MCF 10A (cell line): ENCODE measurements at regions of chr1 and their contacts with region 1.

Region 1: GRCh38 chr1:168145184-168146159 is 8.7 kb upstream of the GPR161 start:
- DNase-seq: peak; percentile 90
- H3K4me3 Mint-ChIP-seq: no peak overlapping the region
- H3K27ac Mint-ChIP-seq: no peak overlapping the region
- H3K4me1 Mint-ChIP-seq: peaks cover 5% of the 10 kb centered on the region
- H3K27me3 Mint-ChIP-seq: no peaks in the 10 kb centered on the region
- CTCF ChIP-seq: peak; percentile 96

Region 2: DNA sequence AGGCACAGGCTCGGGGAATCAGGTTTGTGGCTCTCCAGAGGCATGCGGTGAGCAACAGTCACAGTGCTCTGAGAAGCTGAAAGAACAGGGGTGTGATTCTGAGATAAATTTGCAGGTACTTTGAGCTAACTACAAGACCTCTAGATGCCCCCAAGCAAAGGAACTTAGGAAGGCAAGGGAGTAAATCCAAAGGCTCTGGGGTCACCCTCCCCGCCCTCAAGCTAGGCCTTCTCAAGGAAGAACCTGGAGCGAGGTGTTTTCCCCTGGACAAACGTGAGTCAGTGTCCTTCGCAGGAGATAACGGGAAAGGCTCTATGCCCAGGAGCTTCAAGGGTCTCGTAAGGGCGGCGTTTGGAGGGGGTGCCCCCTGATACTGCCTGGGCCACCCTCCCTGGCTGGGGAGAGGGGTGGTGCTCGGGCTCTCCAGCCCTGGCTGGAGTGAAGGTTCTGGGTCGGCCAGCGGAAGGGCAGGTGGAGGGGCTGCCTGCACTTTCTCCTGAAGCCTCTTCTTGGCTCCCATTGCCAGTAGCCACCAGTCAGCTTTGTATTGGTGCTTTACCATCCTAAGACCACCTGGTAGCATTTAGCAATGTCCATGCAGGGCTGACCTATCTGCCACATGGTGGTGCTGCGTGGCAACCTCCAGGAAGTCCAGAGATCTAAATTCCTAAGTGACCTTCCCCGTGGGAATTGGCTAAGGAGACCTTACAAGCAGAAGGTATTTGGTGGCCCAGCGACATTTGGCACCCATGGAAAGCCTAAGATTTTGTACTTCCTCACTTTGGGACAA is 52.7 kb before region 1 on chr1:
- CTCF ChIA-PET with region 1: interaction called, 64 read pairs
- POLR2A ChIA-PET with region 1: no interaction called
- intact Hi-C with region 1: loop called (anchors 1 kb)
- DNase-seq: peak; percentile 57
- H3K4me3 Mint-ChIP-seq: no peak overlapping the region
- H3K27ac Mint-ChIP-seq: no peak overlapping the region
- H3K4me1 Mint-ChIP-seq: peaks cover 4% of the 10 kb centered on the region
- H3K27me3 Mint-ChIP-seq: no peaks in the 10 kb centered on the region
- CTCF ChIP-seq: peak; percentile 61

Region 3: DNA sequence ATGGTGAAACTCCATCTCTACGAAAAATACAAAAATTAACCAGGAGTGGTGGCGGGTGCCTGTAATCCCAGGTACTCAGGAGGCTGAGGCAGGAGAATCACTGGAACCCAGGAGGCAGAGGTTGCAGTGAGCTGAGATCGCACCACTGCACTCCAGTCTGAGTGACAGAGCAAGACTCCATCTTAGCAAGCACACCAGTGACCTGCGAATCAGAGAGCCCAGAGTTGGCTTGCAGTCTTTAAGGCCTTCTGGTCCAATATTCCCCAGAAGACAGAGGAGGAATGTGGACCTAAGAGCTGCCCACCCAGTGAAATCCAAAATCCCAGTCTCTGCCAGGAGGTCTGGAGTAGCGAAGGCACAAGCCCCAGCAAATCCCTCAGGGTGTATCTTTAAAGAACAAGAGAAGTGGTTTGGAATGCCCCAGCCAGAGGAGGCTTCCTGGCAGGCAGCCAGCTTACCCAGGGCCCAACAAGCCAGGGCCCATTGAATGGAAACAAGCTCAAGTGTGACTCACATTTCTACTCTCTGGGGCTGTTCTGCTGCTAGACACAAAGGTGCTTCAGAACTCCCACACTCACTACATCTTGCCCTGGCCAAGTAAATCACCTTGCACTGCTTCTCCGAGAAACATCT is 32.7 kb before region 1 on chr1:
- CTCF ChIA-PET with region 1: interaction called, 42 read pairs
- POLR2A ChIA-PET with region 1: interaction called, 5 read pairs
- intact Hi-C with region 1: no loop called
- DNase-seq: peak; percentile 100
- H3K4me3 Mint-ChIP-seq: peak overlapping the region; percentile 7
- H3K27ac Mint-ChIP-seq: peak overlapping the region; percentile 32
- H3K4me1 Mint-ChIP-seq: peaks cover 53% of the 10 kb centered on the region
- H3K27me3 Mint-ChIP-seq: no peaks in the 10 kb centered on the region
- CTCF ChIP-seq: no peak

Region 4: DNA sequence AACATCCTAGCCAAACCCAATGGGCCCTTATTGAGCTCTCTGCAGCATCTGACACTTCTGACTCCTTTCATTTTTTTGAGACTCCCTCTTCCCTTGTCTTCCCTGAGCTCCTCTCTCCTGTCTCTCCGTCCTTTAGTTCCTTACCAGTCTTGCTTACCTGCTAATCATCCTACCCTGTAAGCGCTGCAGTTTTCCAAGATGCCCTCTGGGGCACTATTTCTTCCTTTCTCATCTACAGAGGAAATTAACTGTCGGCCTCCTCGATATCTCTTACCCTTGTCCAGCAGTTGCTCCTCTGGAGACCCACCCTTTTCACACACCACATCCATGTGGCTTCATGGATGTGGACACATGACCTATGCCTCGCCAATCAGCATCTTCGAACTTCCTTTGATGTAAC is 15.5 kb before region 1 on chr1:
- CTCF ChIA-PET with region 1: interaction called, 29 read pairs
- POLR2A ChIA-PET with region 1: no interaction called
- intact Hi-C with region 1: no loop called
- DNase-seq: no peak
- H3K4me3 Mint-ChIP-seq: no peak overlapping the region
- H3K27ac Mint-ChIP-seq: no peak overlapping the region
- H3K4me1 Mint-ChIP-seq: peaks cover 2% of the 10 kb centered on the region
- H3K27me3 Mint-ChIP-seq: no peaks in the 10 kb centered on the region
- CTCF ChIP-seq: no peak

Region 5: DNA sequence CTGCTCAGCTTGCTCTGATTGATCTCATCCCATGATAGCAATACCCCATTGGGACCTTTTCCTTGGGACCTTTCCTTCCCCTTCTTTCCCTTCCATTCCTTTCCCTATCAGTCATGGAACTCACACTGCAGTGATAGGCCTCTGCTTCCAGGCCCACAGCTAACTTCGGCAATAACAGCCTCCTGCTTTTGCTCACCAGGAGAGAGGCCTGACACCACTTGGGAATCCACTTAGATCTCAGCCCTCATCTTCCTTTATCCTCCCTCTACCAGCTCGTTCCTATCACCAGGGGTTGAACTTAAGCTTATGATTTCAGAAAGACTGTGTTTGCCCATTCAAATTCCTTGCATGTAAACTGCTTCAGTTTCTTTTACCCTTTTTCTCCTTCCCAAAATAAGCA is 22.3 kb after region 1 on chr1:
- CTCF ChIA-PET with region 1: interaction called, 21 read pairs
- POLR2A ChIA-PET with region 1: interaction called, 3 read pairs
- intact Hi-C with region 1: no loop called
- DNase-seq: no peak
- H3K4me3 Mint-ChIP-seq: no peak overlapping the region
- H3K27ac Mint-ChIP-seq: no peak overlapping the region
- H3K4me1 Mint-ChIP-seq: no peaks in the 10 kb centered on the region
- H3K27me3 Mint-ChIP-seq: no peaks in the 10 kb centered on the region
- CTCF ChIP-seq: no peak

Region 6: DNA sequence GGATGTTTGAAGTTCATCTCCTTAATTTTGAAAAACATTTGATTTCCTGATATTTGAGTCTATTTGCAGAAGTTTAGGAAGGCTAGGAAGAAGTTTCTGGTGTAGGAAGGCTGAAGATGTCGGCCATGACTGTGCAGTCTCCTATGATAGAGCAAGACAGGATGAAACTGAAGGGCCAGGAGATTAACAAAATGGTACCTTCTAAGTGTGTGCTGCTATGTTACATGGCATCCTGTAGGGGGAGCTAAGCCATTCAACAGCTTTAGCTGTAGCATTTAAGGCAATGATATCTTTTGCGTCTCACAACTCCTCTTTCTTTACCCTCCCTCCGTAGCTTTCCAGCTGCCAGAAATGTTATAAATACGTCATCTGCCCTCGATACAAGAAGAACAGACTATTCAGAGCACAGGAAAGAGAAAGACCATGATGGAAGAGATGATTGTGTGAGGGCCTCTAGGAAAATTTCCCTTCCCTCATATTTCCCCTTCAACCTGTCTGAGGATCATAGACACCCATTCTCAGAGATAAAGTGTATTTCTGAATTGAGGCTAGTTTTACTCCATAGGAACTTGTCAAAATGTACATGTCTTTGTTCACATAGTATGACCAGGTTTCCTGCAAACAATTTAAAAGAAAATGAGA is 492.0 kb after region 1 on chr1:
- CTCF ChIA-PET with region 1: no interaction called
- POLR2A ChIA-PET with region 1: no interaction called
- intact Hi-C with region 1: no loop called
- DNase-seq: peak; percentile 64
- H3K4me3 Mint-ChIP-seq: peak overlapping the region; percentile 38
- H3K27ac Mint-ChIP-seq: peak overlapping the region; percentile 84
- H3K4me1 Mint-ChIP-seq: peaks cover 25% of the 10 kb centered on the region
- H3K27me3 Mint-ChIP-seq: no peaks in the 10 kb centered on the region
- CTCF ChIP-seq: peak; percentile 86